Caco-2 (cell line): ENCODE measurements at regions of chr6 and their contacts with region 1.

Region 1: DNA sequence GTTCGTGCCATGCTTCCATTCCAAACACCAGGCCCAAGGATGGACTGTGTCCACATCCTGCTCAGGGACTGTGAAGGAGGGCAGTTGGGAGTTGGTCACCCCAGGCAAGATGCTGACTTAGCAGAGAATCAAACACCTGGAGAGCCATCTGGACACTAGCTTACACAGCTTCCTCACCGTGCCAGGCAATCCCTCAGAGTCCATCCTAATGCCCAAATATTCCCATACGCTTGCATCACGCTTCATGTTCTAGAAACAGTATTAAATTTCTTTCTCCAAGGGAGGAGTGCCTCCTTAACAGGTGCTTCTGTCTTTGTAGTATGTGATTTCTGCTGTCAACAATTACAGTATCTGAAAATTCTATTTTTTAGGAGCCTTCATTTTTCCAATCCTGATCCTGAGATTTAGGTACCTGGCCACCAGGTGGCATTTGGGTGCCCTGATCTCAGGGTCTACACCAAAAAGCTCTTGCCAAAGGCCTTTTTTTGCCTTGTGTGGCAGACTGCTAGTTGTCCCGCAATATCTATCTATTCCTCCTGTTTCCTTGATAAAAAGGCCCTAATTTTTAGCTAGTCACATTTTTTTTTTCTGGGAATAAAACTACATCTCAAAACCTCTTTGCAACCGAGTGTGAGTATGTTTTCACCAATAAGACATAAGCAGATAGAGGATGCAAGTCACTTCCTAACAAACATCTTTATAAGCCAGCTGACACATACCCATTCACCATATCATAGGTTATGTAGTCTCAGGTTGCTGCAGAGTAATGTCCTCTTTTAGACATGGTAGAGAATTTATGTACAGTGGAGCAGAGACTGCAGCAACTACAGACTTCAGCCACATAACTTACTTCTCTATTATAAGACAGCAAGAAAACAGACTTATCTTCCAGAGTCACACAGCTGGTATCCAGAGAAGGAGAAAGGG is 85.0 kb downstream of the PREP start:
- DNase-seq: peak in 1 of 2 experiments; percentile 42
- H3K4me3 ChIP-seq: no peak overlapping the region
- H3K4me3 Mint-ChIP-seq: no peak overlapping the region
- H3K27ac Mint-ChIP-seq: peak overlapping the region; percentile 34
- H3K4me1 ChIP-seq: no peaks in the 10 kb centered on the region
- H3K4me1 Mint-ChIP-seq: no peaks in the 10 kb centered on the region
- H3K27me3 ChIP-seq: no peaks in the 10 kb centered on the region
- H3K27me3 Mint-ChIP-seq: no peaks in the 10 kb centered on the region
- CTCF ChIP-seq: peak; percentile 60 to 66

Region 2: DNA sequence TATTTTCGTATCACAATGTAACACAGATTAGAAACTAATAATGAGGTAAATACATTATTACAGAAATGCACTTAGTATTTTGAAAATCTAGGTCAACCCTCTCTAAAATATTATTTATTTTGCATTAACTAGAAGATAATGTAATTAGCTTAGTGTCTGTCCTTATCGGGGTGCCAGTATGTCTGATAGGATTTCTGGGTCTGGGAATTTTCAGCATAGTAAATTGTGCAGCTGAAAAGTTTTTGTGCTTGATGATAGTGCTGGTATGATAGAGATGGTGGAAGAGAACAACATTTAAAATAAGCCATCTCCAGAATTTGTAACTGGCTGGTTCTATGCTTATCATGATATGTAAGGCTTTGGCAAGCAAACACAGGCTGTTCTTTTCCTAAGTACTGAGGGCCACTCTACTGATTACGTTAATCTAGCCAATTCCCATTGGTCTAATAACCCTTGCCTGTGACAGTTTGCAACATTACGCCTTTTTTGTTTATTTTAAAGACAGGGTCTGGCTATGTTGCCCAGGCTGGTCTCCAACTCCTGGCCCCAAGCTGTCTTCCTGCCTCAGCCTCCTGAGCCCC is 34.3 kb after region 1 on chr6:
- CTCF ChIA-PET with region 1: no interaction called
- POLR2A ChIA-PET with region 1: no interaction called
- intact Hi-C with region 1: loop called (anchors 5 kb)
- DNase-seq: no peak
- H3K4me3 ChIP-seq: no peak overlapping the region
- H3K4me3 Mint-ChIP-seq: no peak overlapping the region
- H3K27ac Mint-ChIP-seq: no peak overlapping the region
- H3K4me1 ChIP-seq: no peaks in the 10 kb centered on the region
- H3K4me1 Mint-ChIP-seq: no peaks in the 10 kb centered on the region
- H3K27me3 ChIP-seq: no peaks in the 10 kb centered on the region
- H3K27me3 Mint-ChIP-seq: no peaks in the 10 kb centered on the region
- CTCF ChIP-seq: no peak